Activated T-helper 1 cell treated with anti-CD3 and anti-CD28 coated beads, Interleukin-12 subunit alpha, Interleukin-12 subunit beta, Interleukin-2, Interleukin-4 antibody, amounts not matched to agents 30 ng/mL and 10 ng/mL and 1 ng/mL, durations not matched to agents 14 hours and 24 hours and 36 hours (primary cell): ENCODE measurements at regions of chr16 and their contacts with region 1.

Region 1: GRCh38 chr16:57535680-57536305 is 578 bp downstream of the CCDC102A start:
- DNase-seq: peak; percentile 92
- H3K4me3 Mint-ChIP-seq: peak overlapping the region; percentile 78
- H3K27ac Mint-ChIP-seq: peak overlapping the region; percentile 93
- H3K4me1 Mint-ChIP-seq: peaks cover 62% of the 10 kb centered on the region
- H3K27me3 Mint-ChIP-seq: no peaks in the 10 kb centered on the region

Region 2: DNA sequence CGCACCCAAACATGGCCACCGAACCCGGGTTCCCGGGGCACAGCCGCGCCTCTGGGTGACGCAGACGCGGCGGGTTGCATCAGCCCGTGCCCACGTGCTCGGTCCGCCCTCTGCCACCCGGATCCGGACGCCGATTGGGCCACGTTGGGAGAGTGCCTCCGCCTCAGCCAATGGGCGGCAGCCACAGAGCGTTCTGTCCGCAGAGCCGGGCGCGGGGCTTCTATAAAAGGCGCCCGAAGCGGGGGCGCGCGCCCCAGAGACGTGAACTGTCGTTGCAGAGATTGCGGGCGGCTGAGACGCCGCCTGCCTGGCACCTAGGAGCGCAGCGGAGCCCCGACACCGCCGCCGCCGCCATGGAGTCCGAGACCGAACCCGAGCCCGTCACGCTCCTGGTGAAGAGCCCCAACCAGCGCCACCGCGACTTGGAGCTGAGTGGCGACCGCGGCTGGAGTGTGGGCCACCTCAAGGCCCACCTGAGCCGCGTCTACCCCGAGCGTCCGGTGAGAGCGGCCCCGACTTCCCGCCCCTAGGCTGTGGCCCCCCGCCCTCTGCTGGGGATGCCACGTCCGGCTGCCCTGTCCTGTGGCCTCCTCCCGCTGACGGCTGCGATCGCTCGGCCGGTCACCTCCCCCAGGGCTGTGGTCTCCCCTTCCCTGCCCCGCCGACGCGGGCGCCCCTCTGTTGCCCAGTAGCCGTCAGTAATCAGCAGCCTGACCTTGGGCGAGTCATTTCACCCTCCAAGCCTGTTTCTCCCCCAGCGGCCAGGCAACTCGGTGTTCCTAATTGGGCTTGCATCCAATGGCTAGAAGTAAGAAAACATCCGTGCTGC is 603.7 kb before region 1 on chr16 and contains the start of gene HERPUD1:
- intact Hi-C with region 1: loop called (anchors 10 kb)
- DNase-seq: peak; percentile 99
- H3K4me3 Mint-ChIP-seq: peak within 1 kb of the TSS; percentile 95
- H3K27ac Mint-ChIP-seq: peak within 1 kb of the TSS; percentile 94
- H3K4me1 Mint-ChIP-seq: peaks cover 41% of the 10 kb centered on the region
- H3K27me3 Mint-ChIP-seq: no peaks in the 10 kb centered on the region
- total RNA-seq, gene HERPUD1: 176 and 178 TPM in 2 replicates

Region 3: GRCh38 chr16:57485916-57486857 is 49.6 kb before region 1 on chr16 and contains the start of gene DOK4:
- intact Hi-C with region 1: loop called (anchors 1 kb)
- DNase-seq: peak; percentile 71
- H3K4me3 Mint-ChIP-seq: peak within 1 kb of the TSS; percentile 84
- H3K27ac Mint-ChIP-seq: peak within 1 kb of the TSS; percentile 61
- H3K4me1 Mint-ChIP-seq: peaks cover 20% of the 10 kb centered on the region
- H3K27me3 Mint-ChIP-seq: peaks cover 20% of the 10 kb centered on the region
- total RNA-seq, gene DOK4: 4.4 and 4.9 TPM in 2 replicates

Region 4: DNA sequence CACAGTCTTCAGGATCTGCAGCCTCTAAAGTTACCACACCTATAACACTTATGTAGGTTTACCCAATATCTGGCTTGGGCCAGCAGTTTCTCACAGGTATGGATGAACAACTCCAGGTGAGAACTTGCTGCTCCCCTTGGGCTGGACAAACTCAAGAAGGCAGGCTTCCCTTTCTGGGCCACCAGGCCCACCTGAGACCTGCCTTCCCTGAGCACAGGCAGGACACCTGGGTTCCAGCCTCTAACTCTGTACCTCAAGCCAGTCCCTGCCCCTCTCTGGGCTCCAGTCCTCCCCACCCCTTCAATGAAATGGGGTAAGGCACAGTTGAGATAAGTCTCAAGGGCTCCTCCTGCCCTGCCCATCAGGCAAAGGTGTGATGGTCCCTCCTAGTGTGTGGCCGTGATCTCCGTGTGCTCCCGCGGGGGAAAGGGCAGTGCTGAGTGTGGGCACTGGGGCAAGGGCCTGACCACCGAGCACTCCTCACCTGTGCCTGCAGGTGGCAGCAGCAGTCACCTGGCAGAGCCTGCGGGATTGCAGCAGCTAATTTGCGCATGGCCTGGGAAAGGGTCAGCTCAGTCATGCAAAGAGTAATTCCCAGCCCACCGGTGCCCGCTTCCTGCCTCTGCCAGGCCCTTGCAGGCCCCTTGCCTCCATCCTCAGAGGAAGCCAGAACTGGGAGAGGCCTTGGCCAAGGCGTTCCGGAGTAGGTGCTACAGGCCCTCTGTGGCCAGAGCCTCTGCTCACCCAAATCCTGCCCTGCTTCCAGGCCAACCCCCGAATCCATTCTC is 64.4 kb after region 1 on chr16:
- intact Hi-C with region 1: loop called (anchors 2 kb)
- DNase-seq: no peak
- H3K4me3 Mint-ChIP-seq: no peak overlapping the region
- H3K27ac Mint-ChIP-seq: peak overlapping the region; percentile 24
- H3K4me1 Mint-ChIP-seq: peaks cover 62% of the 10 kb centered on the region
- H3K27me3 Mint-ChIP-seq: no peaks in the 10 kb centered on the region

Region 5: DNA sequence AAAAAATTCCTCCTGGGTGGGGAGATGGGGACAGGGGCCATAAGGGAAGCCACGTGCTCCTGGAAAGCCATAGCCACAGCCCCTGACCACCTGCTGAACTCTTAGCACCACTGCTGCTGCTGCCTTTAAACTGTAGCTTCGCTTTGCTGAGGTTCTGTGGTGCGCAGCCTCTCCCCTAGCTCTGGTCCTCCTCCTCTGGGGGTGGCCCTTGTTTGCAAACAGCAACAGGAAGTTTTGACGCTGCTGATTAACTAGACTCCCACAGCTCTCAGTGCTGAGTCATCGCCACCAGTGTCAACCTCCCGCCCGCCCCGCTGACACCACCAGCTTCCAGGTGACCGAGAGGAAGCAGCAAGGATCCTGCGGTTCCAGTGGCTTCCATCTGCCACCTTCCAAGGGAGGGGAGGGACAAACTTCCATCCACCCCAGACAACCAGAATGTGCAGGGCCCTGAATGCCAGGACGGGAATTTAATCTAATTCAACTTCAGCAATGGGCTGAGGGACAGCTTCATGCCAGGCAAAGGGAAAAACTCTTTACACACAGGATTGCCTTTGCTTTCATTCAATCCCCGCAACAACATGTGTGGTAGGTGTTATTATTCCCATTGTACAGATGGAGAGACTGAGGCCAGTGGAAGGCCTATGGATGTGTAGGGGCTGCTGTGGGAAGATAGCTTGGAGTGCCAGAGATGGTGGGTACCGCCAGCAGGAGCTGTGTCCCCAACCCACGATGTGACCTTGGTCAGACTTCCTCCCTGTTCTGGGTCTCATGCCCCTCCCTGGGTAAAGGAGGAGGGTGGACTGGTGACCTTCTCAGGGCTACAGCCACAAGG is 274.6 kb after region 1 on chr16:
- intact Hi-C with region 1: loop called (anchors 5 kb)
- DNase-seq: peak; percentile 80
- H3K4me3 Mint-ChIP-seq: peak overlapping the region; percentile 61
- H3K27ac Mint-ChIP-seq: peak overlapping the region; percentile 83
- H3K4me1 Mint-ChIP-seq: peaks cover 36% of the 10 kb centered on the region
- H3K27me3 Mint-ChIP-seq: peaks cover 18% of the 10 kb centered on the region